Activated T-helper 2 cell treated with anti-CD3 and anti-CD28 coated beads, Interferon-gamma antibody, Interleukin-2, Interleukin-4, amounts not matched to agents 10 μg/mL and 5 μg/mL and 100 μg/mL, durations not matched to agents 14 hours and 24 hours and 36 hours (primary cell): ENCODE measurements at regions of chr18 and their contacts with region 1.

Region 1: DNA sequence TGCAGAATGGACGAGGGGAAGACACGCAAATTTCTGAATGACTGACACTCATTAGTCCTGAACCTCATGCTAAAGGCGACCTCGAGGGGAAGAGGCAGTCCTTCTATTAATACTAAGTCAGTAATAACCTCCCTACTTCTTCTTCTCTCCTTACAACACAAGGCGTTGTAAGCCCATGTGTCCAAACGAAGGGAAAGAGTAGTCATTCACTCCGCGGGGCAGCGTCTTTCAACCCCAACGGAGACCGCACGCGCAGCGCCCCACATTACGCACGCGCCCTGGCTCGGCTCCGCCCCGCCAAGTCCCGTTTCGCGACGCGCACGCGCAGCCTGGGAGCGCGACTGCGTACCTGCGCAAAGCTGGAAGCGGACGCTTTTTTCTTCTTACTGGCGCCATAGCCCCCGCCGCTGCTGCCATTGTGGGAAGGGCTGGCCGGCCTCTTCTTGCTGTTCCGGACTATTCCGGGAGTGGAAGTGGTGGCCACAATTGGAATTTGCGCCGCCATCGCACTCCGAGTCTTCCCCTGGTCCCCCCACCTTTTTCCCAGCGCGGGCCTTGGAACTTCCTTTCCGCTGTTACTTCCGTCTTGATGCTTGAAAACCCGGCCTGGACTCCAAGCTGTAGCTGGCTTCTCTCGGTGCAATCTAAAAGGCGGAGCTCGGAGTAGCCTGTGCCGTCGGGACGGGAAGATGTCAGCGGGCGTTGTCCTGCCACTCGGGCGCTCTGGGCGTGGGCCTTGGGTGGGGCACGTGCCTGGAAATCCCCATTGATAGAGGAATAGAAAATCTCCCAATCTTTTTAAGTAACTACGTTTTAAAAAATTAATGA is at the start of gene INO80C:
- DNase-seq: peak; percentile 90
- H3K4me3 Mint-ChIP-seq: peak within 1 kb of the TSS; percentile 96
- H3K27ac Mint-ChIP-seq: peak within 1 kb of the TSS; percentile 99
- H3K4me1 Mint-ChIP-seq: peaks cover 35% of the 10 kb centered on the region
- H3K27me3 Mint-ChIP-seq: no peaks in the 10 kb centered on the region
- total RNA-seq, gene INO80C: 34.9 and 35.9 TPM in 2 replicates

Region 2: GRCh38 chr18:34976899-34977837 is 520.4 kb before region 1 on chr18:
- intact Hi-C with region 1: loop called (anchors 5 kb)
- DNase-seq: peak; percentile 62
- H3K4me3 Mint-ChIP-seq: peak overlapping the region; percentile 81
- H3K27ac Mint-ChIP-seq: no peak overlapping the region
- H3K4me1 Mint-ChIP-seq: peaks cover 25% of the 10 kb centered on the region
- H3K27me3 Mint-ChIP-seq: peaks cover 37% of the 10 kb centered on the region

Region 3: DNA sequence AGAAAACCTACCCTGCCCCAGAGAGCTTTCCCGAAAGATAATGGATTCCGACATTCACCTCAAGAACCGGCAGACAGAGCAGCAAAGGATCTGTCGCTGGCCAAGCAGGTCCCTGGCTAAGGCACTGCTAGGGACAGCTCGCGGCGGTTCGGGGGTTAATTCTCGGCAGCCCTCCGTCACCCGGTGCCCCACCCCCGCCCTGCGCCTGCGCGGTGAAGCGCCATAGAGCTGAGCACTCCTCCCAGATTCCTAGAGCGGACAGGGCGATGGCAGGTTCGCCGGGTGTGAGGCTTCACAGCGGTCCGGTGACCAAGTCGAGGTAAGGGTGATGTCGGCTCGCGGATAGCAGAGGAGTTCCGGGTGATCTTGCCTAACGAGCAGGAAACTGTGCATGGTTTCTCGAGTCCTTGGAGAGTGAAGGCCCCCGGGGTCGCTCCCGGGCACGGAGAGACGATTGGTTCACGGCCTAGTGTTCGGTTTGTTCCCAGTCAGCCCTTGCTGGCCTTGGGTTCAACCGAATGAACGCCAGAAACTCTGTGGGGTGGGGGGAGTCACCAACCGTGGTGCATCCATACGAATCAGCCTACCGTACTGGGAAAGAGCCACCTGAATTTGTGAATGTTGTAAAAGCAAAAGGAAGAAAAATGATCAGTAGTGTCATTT is 207.4 kb before region 1 on chr18 and contains the start of gene ZSCAN30:
- intact Hi-C with region 1: loop called (anchors 5 kb)
- DNase-seq: peak; percentile 93
- H3K4me3 Mint-ChIP-seq: peak within 1 kb of the TSS; percentile 98
- H3K27ac Mint-ChIP-seq: peak within 1 kb of the TSS; percentile 94
- H3K4me1 Mint-ChIP-seq: peaks cover 29% of the 10 kb centered on the region
- H3K27me3 Mint-ChIP-seq: no peaks in the 10 kb centered on the region
- total RNA-seq, gene ZSCAN30: 15.5 and 19.9 TPM in 2 replicates

Region 4: DNA sequence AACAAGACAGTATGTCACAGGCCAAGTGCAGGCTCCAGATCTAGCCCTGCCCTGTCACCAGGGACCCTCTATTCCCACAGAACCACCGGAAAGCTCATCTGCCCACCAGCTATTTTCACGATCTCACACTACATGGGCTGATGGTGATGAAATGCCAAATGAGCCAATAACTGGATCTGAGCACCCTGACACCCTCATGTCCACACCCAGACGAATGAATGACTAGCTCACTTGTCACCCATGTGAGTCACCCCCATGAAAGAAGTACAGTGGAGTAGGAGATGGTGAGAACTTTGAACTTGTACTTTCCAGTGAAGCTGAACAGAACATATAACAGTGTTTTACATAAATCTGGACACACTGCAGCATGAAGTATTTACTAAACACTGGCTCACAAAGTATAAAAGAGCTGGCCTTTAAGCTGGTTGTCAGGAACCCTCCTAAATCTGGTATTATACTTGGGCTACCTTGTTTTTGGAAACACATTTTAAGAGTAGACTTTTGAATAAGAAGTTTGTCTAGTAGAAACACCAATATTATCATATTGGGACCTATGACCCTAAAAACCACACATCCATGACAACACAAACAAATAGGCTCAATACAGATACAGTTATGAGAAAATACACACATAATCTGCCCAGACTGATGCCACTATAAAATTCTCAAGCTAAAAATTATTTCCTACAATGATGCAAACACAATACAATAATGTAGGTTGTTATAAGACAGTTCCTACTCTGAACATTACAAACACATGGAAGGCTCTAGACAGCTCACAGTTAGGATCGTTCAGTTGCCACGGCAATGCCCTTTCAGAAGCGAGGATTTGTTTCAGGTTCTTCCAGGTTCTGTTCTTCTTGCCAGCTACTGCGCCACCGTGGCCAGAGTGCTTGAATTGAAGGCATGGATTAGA is 18.8 kb before region 1 on chr18:
- intact Hi-C with region 1: loop called (anchors 1 kb)
- DNase-seq: no peak
- H3K4me3 Mint-ChIP-seq: no peak overlapping the region
- H3K27ac Mint-ChIP-seq: peak overlapping the region; percentile 57
- H3K4me1 Mint-ChIP-seq: peaks cover 21% of the 10 kb centered on the region
- H3K27me3 Mint-ChIP-seq: no peaks in the 10 kb centered on the region

Region 5: DNA sequence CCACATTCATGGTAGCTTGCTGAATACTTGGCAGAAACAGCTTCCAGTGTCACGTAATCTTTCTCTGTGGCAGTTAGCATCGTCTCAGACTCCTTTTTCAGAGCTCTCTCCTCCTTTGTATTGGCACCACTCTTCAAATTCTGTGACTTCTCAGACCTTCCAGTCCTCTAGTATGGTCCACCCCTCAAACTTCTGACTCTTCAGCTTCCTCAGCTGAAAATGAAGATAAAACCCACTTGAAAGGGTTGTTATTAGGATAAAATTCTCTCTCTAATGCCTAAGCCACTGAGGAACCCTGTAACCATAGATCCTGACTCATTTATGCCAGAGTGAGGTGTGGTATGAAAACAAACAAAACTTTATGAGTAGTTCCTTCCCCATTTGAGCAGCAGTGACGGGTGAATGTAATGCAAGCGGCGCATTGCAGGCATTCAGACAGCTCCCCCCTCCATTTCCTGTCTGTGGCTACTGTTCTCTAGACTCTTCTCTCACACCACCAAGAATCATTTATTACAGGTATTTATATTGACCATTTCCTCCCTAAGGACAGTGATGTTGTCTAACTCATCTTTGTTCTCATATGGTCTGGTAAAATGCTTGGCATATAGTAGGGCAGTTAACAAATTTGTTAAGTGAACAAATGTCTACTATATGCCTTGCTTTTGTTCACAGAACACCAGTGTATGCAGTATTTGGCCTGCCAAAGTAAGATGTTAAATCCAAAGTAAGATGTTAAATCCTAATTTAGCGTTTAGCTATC is 119.3 kb after region 1 on chr18:
- intact Hi-C with region 1: loop called (anchors 2 kb)
- DNase-seq: peak; percentile 57
- H3K4me3 Mint-ChIP-seq: no peak overlapping the region
- H3K27ac Mint-ChIP-seq: no peak overlapping the region
- H3K4me1 Mint-ChIP-seq: peaks cover 15% of the 10 kb centered on the region
- H3K27me3 Mint-ChIP-seq: no peaks in the 10 kb centered on the region